Activated B cell treated with CpG ODN at 0.5 μM for 24 hours (primary cell): ENCODE measurements at regions of chr17 and their contacts with region 1.

Region 1: DNA sequence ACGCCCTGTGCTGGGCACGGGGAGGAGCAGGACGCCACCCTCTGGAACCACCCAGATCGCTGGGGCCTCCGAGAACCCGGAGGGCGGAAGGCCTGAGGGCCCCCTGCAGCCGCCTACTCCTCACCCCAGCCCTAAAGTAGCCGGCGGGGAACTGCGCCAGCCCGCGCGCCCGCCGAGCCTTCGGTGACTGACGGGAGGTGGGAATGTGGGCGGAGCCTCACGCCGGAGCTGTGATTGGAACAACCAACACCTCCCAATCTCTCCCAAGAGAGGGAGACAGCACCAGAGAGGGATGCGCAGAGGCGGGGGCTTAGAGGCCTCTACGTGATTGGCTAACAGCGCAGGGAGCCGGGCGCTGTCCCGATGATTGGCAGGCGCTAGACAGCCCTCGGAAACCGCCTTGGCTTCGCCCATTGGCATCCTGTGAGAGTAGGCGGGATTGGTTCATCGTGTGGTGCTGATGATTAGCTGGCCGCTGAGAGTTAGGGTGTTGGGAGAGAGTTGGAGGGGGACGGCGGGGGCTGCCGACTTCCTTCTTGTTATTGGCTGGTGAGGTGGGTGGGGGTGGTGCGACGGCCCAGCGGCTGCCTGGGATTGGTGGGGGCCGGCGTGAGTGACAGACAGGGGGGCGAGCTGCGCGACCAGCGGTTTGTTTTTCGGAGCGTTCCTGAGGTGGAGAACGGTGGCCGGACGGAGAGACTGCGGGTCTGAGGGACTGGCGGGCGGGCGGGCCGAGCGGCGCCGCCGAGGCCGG is at the start of gene MAP3K3:
- DNase-seq: peak; percentile 85
- ATAC-seq: peak; percentile 89
- H3K4me3 Mint-ChIP-seq: peak within 1 kb of the TSS; percentile 95
- H3K27ac Mint-ChIP-seq: peak within 1 kb of the TSS; percentile 91
- H3K4me1 Mint-ChIP-seq: peaks cover 33% of the 10 kb centered on the region
- H3K27me3 Mint-ChIP-seq: no peaks in the 10 kb centered on the region
- CTCF ChIP-seq: no peak
- total RNA-seq, gene MAP3K3: 32.5 and 32.9 TPM in 2 replicates

Region 2: GRCh38 chr17:63425482-63425881 is 196.5 kb before region 1 on chr17:
- CTCF ChIA-PET with region 1: interaction called, 141 read pairs
- POLR2A ChIA-PET with region 1: interaction called, 6 read pairs
- intact Hi-C with region 1: no loop called
- DNase-seq: peak; percentile 56
- ATAC-seq: peak; percentile 86
- H3K4me3 Mint-ChIP-seq: no peak overlapping the region
- H3K27ac Mint-ChIP-seq: no peak overlapping the region
- H3K4me1 Mint-ChIP-seq: peaks cover 8% of the 10 kb centered on the region
- H3K27me3 Mint-ChIP-seq: peaks cover 2% of the 10 kb centered on the region
- CTCF ChIP-seq: peak; percentile 96

Region 3: DNA sequence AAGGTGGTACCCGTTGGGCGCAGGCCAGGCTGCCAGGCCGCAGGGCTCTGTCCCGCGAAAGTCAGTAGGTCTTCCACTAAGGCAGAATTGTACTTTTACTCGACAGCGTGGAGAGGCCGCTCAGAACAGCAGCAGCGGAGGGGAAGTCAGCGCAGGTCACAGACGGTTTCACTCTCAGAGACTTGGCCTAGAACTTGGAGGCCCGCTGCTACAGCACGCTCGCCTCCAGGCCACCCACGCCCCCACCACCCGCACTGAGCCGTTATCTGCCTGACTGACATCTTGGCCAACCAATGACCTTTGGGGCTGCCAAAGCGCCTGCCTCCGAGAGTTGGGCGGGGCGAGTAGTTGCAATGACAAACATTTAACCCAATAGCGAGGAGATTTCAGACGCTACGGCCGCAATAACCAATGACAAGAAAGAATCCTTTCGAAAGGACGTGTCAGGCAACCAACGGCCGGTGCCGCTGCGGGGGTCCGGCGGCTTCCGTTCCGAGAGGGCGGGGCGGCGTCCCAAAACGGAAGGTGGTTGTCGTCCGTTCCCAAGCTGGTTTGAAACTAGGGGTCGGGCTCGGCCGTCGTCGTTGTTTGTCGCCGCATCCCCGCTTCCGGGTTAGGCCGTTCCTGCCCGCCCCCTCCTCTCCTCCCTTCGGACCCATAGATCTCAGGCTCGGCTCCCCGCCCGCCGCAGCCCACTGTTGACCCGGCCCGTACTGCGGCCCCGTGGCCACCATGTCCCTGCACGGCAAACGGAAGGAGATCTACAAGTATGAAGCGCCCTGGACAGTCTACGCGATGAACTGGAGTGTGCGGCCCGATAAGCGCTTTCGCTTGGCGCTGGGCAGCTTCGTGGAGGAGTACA is 71.8 kb before region 1 on chr17 and contains the start of gene DCAF7:
- CTCF ChIA-PET with region 1: no interaction called
- POLR2A ChIA-PET with region 1: interaction called, 25 read pairs
- intact Hi-C with region 1: loop called (anchors 1 kb)
- DNase-seq: peak; percentile 94
- ATAC-seq: peak; percentile 94
- H3K4me3 Mint-ChIP-seq: peak within 1 kb of the TSS; percentile 99
- H3K27ac Mint-ChIP-seq: peak within 1 kb of the TSS; percentile 95
- H3K4me1 Mint-ChIP-seq: peaks cover 56% of the 10 kb centered on the region
- H3K27me3 Mint-ChIP-seq: no peaks in the 10 kb centered on the region
- CTCF ChIP-seq: no peak
- total RNA-seq, gene DCAF7: 91.9 and 103 TPM in 2 replicates

Region 4: GRCh38 chr17:63611354-63611753 is 10.6 kb before region 1 on chr17:
- CTCF ChIA-PET with region 1: interaction called, 8 read pairs
- POLR2A ChIA-PET with region 1: interaction called, 10 read pairs
- intact Hi-C with region 1: loop called (anchors 1 kb)
- DNase-seq: no peak
- ATAC-seq: no peak
- H3K4me3 Mint-ChIP-seq: no peak overlapping the region
- H3K27ac Mint-ChIP-seq: no peak overlapping the region
- H3K4me1 Mint-ChIP-seq: no peaks in the 10 kb centered on the region
- H3K27me3 Mint-ChIP-seq: no peaks in the 10 kb centered on the region
- CTCF ChIP-seq: no peak

Region 5: DNA sequence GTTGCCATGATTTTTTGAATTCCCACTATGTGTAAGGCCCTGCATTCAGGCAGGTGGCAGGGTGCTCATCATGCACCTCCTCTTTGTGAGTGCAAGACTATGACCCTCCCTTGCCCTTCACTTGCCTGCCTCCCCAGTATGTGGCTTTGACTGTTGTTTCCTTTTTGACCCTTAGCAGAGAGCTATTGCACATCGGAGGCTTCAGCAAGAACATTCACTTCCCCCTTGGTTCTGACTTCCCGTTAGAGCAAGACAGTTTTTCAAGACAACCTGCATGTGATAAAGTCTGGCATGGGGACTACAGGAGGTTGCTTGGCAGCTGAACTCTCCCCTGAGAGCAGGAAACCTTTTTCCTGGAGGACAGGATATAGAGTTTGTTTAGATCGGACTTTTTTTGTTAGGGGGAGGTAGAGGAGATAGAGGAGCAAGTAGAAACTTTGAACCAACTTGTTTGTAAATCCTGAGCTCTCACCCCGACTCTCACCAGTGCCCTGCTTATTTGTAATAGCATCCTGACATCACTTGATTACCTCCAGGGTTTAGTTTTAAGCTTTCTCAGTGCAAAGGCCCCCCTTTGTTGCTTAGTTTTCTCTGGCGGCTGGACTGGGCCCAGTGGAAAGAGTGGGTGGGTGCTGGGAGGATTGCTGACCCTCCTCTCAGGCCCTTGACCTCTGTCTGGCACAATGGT is 43.7 kb after region 1 on chr17:
- CTCF ChIA-PET with region 1: interaction called, 3 read pairs
- POLR2A ChIA-PET with region 1: interaction called, 15 read pairs
- intact Hi-C with region 1: loop called (anchors 5 kb)
- DNase-seq: no peak
- ATAC-seq: peak; percentile 71
- H3K4me3 Mint-ChIP-seq: peak overlapping the region; percentile 68
- H3K27ac Mint-ChIP-seq: peak overlapping the region; percentile 95
- H3K4me1 Mint-ChIP-seq: peaks cover 44% of the 10 kb centered on the region
- H3K27me3 Mint-ChIP-seq: no peaks in the 10 kb centered on the region
- CTCF ChIP-seq: no peak

Region 6: DNA sequence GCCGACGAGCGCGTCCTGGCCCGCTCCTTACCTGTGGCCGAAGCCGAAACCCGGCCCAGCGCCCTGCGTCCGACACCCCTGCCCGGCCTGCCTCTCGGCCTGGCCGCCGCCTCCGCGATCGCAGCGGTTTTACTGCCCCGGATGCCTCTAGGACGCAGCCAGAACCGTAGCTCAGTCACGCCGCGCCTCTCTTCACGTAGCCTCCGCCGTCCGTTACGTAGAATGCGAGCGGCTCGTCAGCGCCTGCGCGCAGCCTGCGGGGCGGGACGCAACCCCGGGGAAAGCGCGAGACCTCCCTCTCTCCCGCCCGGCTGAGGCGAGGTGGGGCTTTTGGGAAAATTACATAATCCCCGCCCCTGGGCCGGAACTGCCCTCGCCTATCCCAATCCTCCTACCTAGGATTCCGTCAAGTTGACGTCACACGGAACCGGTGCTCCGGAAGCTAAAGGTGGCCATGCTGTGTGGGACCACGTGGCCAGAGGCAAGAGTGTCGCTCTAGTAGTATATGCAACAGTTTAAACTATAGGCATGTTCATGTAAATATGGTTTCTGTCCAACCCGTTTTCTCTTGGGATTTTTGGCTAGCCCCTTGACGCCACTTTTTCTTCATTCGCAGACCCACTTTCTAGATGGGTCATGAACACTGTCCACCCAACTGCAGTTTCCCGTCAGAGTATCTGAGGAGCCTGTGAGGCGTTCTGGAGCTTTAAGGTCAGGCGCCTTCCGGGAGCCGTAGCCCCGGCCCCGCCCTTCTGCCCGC is 151.6 kb after region 1 on chr17 and contains the start of gene CCDC47:
- CTCF ChIA-PET with region 1: no interaction called
- POLR2A ChIA-PET with region 1: interaction called, 38 read pairs
- intact Hi-C with region 1: loop called (anchors 1 kb)
- DNase-seq: peak; percentile 96
- ATAC-seq: peak; percentile 76
- H3K4me3 Mint-ChIP-seq: peak within 1 kb of the TSS; percentile 92
- H3K27ac Mint-ChIP-seq: peak within 1 kb of the TSS; percentile 99
- H3K4me1 Mint-ChIP-seq: peaks cover 59% of the 10 kb centered on the region
- H3K27me3 Mint-ChIP-seq: no peaks in the 10 kb centered on the region
- CTCF ChIP-seq: no peak
- total RNA-seq, gene CCDC47: 41.4 and 47.6 TPM in 2 replicates

Region 7: GRCh38 chr17:63842540-63843386 is 220.8 kb after region 1 on chr17 and contains the start of gene SMARCD2:
- CTCF ChIA-PET with region 1: no interaction called
- POLR2A ChIA-PET with region 1: interaction called, 7 read pairs
- intact Hi-C with region 1: loop called (anchors 1 kb)
- DNase-seq: peak; percentile 96
- ATAC-seq: peak; percentile 90
- H3K4me3 Mint-ChIP-seq: peak within 1 kb of the TSS; percentile 94
- H3K27ac Mint-ChIP-seq: peak within 1 kb of the TSS; percentile 95
- H3K4me1 Mint-ChIP-seq: peaks cover 49% of the 10 kb centered on the region
- H3K27me3 Mint-ChIP-seq: no peaks in the 10 kb centered on the region
- CTCF ChIP-seq: no peak
- total RNA-seq, gene SMARCD2: 114 and 117 TPM in 2 replicates